Left ventricle myocardium superior (tissue), 1 donor: ENCODE measurements at regions of chr12 and their contacts with region 1.

Region 1: GRCh38 chr12:79549497-79550271 is 141.1 kb downstream of the PAWR start:
- DNase-seq: no peak
- ATAC-seq: no peak

Region 2: DNA sequence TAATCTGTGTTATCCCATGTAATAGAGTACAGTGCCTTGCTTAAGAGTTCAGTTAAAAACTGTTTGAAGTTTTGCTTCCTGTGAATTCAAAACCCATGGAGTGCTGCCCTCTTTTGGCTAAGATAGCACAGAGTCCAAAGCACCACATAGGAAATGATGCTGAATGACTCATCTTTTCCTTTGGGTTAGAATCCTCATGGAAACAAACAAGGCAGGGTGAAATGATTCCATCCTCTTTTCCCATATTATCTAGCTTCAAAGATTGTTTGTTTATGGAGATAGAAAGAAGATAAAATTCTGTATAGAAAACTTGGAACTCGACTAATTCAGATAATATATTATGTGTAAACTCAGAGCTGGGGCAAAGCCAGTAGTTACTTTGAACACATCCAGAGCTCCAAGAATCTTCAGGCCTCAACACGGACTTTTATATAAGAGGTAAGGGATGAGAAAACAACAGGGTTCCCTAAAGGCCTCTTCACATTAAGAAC is 637.1 kb after region 1 on chr12:
- intact Hi-C with region 1: loop called (anchors 5 kb)
- DNase-seq: no peak
- ATAC-seq: peak; percentile 91